ENCODE measurements at regions of chr22 and their contacts with region 1.

Region 1: GRCh38 chr22:40044102-40044869 is 49.5 kb downstream of the FAM83F start:
- DNase-seq: peak; percentile 96 to 100 (median 98)
- ATAC-seq: peak; percentile 86
- H3K4me3 ChIP-seq: peak overlapping the region; percentile 67
- H3K4me3 Mint-ChIP-seq: peak overlapping the region; percentile 97
- H3K27ac ChIP-seq: peak overlapping the region; percentile 97 to 100
- H3K27ac Mint-ChIP-seq: peak overlapping the region; percentile 98
- H3K4me1 ChIP-seq: peaks cover 43% of the 10 kb centered on the region
- H3K4me1 Mint-ChIP-seq: peaks cover 45% of the 10 kb centered on the region
- H3K27me3 ChIP-seq: peaks cover 0 to 4% of the 10 kb centered on the region in 2 experiments
- H3K27me3 Mint-ChIP-seq: peaks cover 7% of the 10 kb centered on the region
- CTCF ChIP-seq: no peak

Region 2: DNA sequence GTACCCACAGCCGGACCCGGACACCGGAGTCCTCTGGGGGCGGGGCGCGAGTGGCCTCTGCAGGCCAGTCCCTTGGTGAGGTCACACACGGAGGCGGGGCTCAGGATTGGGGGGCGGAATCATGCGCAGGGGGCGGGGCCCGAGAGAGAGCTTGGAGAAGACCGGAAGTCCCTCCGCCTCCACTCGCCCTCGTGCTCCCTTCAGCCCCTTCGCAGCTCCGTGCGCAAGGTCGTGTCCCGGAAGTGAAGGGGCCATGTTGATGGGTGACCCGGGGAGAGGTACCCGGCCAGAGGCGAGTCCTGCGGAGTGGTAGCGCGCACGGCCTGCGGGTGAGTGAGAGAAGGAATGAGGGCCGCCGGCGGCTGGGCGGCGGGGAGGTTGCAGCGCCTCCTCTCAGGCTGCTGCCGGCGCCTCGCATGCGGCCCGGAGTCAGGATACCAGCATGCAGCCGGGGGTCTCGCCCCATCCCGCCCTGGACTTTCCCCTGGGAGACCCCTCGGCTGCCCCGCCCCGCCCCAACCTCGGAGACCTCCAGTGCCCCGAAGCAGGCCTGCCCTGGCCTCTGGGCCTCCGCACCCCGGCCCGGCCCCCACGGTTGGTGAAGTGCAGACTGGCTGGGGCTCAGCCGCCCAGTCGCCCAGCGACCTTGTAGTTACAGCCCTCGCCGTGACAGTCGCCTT is 542.0 kb before region 1 on chr22 and contains the start of gene MIEF1:
- CTCF ChIA-PET with region 1: no interaction called
- POLR2A ChIA-PET with region 1: interaction called, 23 read pairs
- intact Hi-C with region 1: no loop called
- DNase-seq: peak; percentile 70 to 96 (median 86)
- ATAC-seq: peak; percentile 94
- H3K4me3 ChIP-seq: peak within 1 kb of the TSS; percentile 67
- H3K4me3 Mint-ChIP-seq: peak within 1 kb of the TSS; percentile 99
- H3K27ac ChIP-seq: peak within 1 kb of the TSS; percentile 61 to 71
- H3K27ac Mint-ChIP-seq: peak within 1 kb of the TSS; percentile 92
- H3K4me1 ChIP-seq: peaks cover 39% of the 10 kb centered on the region
- H3K4me1 Mint-ChIP-seq: peaks cover 47% of the 10 kb centered on the region
- H3K27me3 ChIP-seq: no peaks in the 10 kb centered on the region
- H3K27me3 Mint-ChIP-seq: no peaks in the 10 kb centered on the region
- CTCF ChIP-seq: no peak
- total RNA-seq, gene MIEF1: 19.8 to 20.4 TPM

Region 3: DNA sequence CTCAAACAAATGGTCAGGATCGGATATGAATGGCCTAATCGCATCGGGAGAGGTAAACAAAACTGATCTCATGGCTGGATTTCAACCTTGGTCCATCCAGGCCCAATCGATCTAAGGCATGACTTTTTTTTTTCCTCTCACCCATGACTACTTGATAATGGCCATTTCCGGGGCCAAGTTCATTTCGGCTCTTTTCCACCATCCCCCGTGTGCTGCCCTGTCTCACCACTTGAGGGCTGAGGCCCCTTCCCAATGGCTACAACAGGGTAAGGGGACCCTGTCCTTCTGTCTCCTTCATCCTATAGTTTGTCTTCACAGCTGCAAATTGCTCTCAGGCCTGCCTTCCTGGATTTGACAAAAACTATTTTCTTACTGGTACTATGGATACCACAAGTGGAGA is 116.7 kb before region 1 on chr22:
- CTCF ChIA-PET with region 1: no interaction called
- POLR2A ChIA-PET with region 1: interaction called, 12 read pairs
- intact Hi-C with region 1: no loop called
- DNase-seq: no peak
- ATAC-seq: no peak
- H3K4me3 ChIP-seq: peak overlapping the region; percentile 51
- H3K4me3 Mint-ChIP-seq: no peak overlapping the region
- H3K27ac ChIP-seq: peak overlapping the region; percentile 38 to 58
- H3K27ac Mint-ChIP-seq: no peak overlapping the region
- H3K4me1 ChIP-seq: peaks cover 89% of the 10 kb centered on the region
- H3K4me1 Mint-ChIP-seq: peaks cover 39% of the 10 kb centered on the region
- H3K27me3 ChIP-seq: no peaks in the 10 kb centered on the region
- H3K27me3 Mint-ChIP-seq: no peaks in the 10 kb centered on the region
- CTCF ChIP-seq: no peak

Region 4: DNA sequence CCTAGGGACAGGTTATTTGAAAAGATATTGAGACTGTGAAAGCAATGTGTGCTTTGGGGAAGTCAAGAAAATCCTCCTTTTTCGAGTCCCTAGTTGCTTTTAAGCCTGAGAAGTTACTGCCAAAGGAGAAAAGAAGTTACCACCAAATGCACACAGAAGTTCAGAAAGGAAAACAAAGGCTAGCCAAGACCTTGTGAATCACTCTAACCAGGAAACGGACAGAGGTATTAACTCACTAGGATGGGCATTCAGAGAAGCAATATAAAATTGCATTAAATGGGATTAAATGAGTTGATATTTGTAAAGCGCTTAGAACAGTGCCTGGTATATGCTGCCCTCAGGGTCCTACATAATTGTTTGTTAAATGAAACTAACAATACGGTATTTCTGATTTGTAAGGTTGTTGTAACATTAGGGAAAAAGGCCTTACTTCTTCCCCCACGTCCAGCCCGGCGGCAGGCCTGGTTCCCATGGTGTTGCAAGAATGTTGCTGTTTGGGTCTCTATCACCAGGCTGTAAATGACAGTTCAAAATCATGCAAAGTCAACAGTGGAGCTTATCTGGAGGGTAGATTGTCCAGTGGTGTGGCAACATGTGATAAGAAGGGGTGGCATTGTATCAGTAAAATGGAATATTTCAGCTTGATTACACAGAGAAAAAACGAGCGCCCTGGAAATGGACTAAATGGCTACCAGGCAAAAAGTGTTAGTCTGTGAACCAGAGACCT is 77.0 kb before region 1 on chr22:
- CTCF ChIA-PET with region 1: no interaction called
- POLR2A ChIA-PET with region 1: no interaction called
- intact Hi-C with region 1: no loop called
- DNase-seq: no peak
- ATAC-seq: no peak
- H3K4me3 ChIP-seq: no peak overlapping the region
- H3K4me3 Mint-ChIP-seq: no peak overlapping the region
- H3K27ac ChIP-seq: no peak overlapping the region
- H3K27ac Mint-ChIP-seq: peak overlapping the region; percentile 80
- H3K4me1 ChIP-seq: peaks cover 3% of the 10 kb centered on the region
- H3K4me1 Mint-ChIP-seq: peaks cover 20% of the 10 kb centered on the region
- H3K27me3 ChIP-seq: no peaks in the 10 kb centered on the region
- H3K27me3 Mint-ChIP-seq: no peaks in the 10 kb centered on the region
- CTCF ChIP-seq: no peak

Region 5: DNA sequence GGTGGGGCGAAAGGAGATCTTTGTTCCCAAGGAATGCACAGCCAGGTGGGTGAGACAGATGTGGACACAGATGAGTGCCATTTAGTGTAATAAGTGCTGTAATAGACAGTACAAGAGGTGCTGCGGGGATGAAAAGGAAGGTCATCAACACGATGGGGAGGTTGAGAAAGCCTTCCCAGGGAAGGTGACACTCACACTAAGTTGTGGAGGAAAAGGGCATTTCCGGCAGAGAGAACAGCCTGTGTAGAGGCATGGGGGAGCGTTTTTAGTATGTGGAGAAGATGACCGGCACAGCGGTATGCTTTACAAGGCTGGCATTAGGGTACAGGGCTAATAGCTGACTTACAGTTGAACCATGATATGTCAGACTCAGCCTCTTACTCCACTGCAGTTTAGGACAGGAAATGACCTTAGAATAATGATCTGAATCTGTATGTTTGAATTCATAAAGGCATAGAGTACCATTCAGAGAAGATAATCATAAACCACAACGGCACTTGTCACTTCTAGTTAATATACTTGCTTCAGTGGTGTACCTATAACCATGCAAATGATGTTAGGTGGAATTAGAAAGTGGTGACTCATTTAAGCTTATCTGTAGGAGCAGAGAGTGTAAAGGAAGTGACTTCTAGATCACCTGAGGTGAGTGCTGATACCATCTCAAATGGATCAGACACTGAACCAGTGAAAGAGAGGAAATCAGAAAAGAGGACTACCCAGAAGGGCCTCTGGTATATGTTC is 11.0 kb after region 1 on chr22:
- CTCF ChIA-PET with region 1: interaction called, 5 read pairs
- POLR2A ChIA-PET with region 1: interaction called, 85 read pairs
- intact Hi-C with region 1: no loop called
- DNase-seq: peak in 4 of 14 experiments; percentile 23 to 80 (median 74)
- ATAC-seq: peak; percentile 95
- H3K4me3 ChIP-seq: peak overlapping the region; percentile 17
- H3K4me3 Mint-ChIP-seq: peak overlapping the region; percentile 57
- H3K27ac ChIP-seq: peak overlapping the region; percentile 72 to 86
- H3K27ac Mint-ChIP-seq: peak overlapping the region; percentile 82
- H3K4me1 ChIP-seq: peaks cover 71% of the 10 kb centered on the region
- H3K4me1 Mint-ChIP-seq: peaks cover 82% of the 10 kb centered on the region
- H3K27me3 ChIP-seq: no peaks in the 10 kb centered on the region
- H3K27me3 Mint-ChIP-seq: no peaks in the 10 kb centered on the region
- CTCF ChIP-seq: no peak

Region 6: GRCh38 chr22:40177738-40178416 is 133.6 kb after region 1 on chr22 and contains the start of gene TNRC6B:
- CTCF ChIA-PET with region 1: interaction called, 5 read pairs
- POLR2A ChIA-PET with region 1: interaction called, 80 read pairs
- intact Hi-C with region 1: loop called (anchors 1 kb)
- DNase-seq: peak; percentile 36 to 97 (median 58)
- ATAC-seq: peak; percentile 80
- H3K4me3 ChIP-seq: peak within 1 kb of the TSS; percentile 74
- H3K4me3 Mint-ChIP-seq: peak within 1 kb of the TSS; percentile 90
- H3K27ac ChIP-seq: peak within 1 kb of the TSS; percentile 49 to 84
- H3K27ac Mint-ChIP-seq: peak within 1 kb of the TSS; percentile 90
- H3K4me1 ChIP-seq: peaks cover 47% of the 10 kb centered on the region
- H3K4me1 Mint-ChIP-seq: peaks cover 72% of the 10 kb centered on the region
- H3K27me3 ChIP-seq: no peaks in the 10 kb centered on the region
- H3K27me3 Mint-ChIP-seq: no peaks in the 10 kb centered on the region
- CTCF ChIP-seq: no peak
- total RNA-seq, gene TNRC6B: 110 to 111 TPM

Region 7: GRCh38 chr22:40326905-40327735 is 282.8 kb after region 1 on chr22:
- CTCF ChIA-PET with region 1: no interaction called
- POLR2A ChIA-PET with region 1: interaction called, 21 read pairs
- intact Hi-C with region 1: no loop called
- DNase-seq: peak in 4 of 14 experiments; percentile 24 to 73 (median 45)
- ATAC-seq: peak; percentile 25
- H3K4me3 ChIP-seq: no peak overlapping the region
- H3K4me3 Mint-ChIP-seq: peak overlapping the region; percentile 75
- H3K27ac ChIP-seq: peak overlapping the region; percentile 52 to 71
- H3K27ac Mint-ChIP-seq: peak overlapping the region; percentile 97
- H3K4me1 ChIP-seq: peaks cover 65% of the 10 kb centered on the region
- H3K4me1 Mint-ChIP-seq: peaks cover 100% of the 10 kb centered on the region
- H3K27me3 ChIP-seq: no peaks in the 10 kb centered on the region
- H3K27me3 Mint-ChIP-seq: no peaks in the 10 kb centered on the region
- CTCF ChIP-seq: no peak